ENCODE measurements at regions of chr10 and their contacts with region 1.

Region 1: GRCh38 chr10:128035557-128035973 is 90.7 kb downstream of the MKI67 start:
- DNase-seq: peak; percentile 80
- ATAC-seq: peak; percentile 94
- H3K4me3 Mint-ChIP-seq: no peak overlapping the region
- H3K27ac Mint-ChIP-seq: no peak overlapping the region
- H3K4me1 Mint-ChIP-seq: peaks cover 10% of the 10 kb centered on the region
- H3K27me3 Mint-ChIP-seq: no peaks in the 10 kb centered on the region
- CTCF ChIP-seq: peak; percentile 89

Region 2: DNA sequence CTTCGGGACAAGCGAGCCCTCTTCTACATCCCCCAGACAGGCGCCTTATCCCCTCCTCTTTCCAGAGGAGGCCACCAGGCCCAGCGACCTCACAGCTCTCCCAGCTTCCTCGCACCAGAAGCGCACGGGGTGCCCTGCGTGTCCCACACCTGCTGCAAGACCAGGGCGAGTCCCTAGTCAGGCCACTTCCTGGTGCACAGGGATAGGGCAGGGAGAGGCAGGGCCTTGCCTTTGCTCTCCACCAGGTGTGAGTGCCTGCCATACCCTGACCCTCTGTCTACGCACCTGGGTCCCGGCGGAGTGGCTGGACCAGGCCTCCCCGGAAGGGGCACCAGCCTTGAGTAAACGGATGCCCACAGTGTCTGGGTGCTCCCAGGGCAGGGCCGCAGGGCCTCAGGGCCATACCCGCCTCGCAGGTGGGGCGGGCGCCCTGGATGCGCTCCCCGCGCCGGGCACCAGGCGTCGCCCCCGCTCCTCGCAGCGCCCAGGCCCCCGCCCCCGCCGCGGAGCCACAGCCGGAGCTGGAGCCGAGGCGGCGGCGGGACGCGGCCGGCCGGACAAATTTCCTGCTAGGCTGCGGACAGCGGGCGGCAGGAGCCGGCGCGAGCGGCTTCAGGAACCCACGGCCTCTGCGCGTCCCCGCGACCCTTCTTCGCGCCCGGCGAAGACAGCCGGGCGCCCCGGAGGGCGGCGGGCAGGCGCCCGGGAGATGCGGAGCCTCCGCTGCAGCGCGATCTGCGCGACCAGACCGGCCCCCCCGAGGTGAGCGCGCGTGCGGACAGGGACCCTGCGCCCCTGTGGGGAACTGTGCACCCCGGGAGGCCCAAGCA is 128.8 kb before region 1 on chr10 and contains the start of gene PTPRE:
- CTCF ChIA-PET with region 1: interaction called, 11 read pairs
- POLR2A ChIA-PET with region 1: no interaction called
- intact Hi-C with region 1: no loop called
- DNase-seq: peak; percentile 73
- ATAC-seq: peak; percentile 99
- H3K4me3 Mint-ChIP-seq: no peak within 1 kb of the TSS
- H3K27ac Mint-ChIP-seq: no peak within 1 kb of the TSS
- H3K4me1 Mint-ChIP-seq: no peaks in the 10 kb centered on the region
- H3K27me3 Mint-ChIP-seq: peaks cover 31% of the 10 kb centered on the region
- CTCF ChIP-seq: peak; percentile 86
- total RNA-seq, gene PTPRE: 19.9 to 22.3 TPM

Region 3: DNA sequence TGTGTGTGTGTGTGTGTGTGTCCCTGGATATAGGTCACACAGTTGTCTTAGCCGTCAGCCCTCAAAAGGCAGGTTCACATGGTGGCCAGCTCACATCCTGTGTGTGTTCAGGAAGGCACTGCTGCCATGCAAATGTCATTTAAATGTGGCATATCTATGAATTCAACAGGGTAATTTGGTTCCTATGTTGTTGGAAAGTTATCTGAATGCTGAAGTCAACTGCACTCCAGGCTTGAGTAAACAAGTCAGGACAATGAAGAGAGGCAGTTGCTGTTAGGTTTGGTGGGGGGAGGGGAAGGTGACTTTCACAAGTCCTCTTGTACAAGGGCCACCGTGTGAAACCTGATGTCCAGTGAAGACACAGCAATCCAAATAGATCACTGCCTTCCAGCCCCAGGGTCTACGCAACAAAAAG is 67.5 kb before region 1 on chr10:
- CTCF ChIA-PET with region 1: no interaction called
- POLR2A ChIA-PET with region 1: no interaction called
- intact Hi-C with region 1: no loop called
- DNase-seq: no peak
- ATAC-seq: peak; percentile 47
- H3K4me3 Mint-ChIP-seq: no peak overlapping the region
- H3K27ac Mint-ChIP-seq: no peak overlapping the region
- H3K4me1 Mint-ChIP-seq: no peaks in the 10 kb centered on the region
- H3K27me3 Mint-ChIP-seq: no peaks in the 10 kb centered on the region
- CTCF ChIP-seq: no peak

Region 4: DNA sequence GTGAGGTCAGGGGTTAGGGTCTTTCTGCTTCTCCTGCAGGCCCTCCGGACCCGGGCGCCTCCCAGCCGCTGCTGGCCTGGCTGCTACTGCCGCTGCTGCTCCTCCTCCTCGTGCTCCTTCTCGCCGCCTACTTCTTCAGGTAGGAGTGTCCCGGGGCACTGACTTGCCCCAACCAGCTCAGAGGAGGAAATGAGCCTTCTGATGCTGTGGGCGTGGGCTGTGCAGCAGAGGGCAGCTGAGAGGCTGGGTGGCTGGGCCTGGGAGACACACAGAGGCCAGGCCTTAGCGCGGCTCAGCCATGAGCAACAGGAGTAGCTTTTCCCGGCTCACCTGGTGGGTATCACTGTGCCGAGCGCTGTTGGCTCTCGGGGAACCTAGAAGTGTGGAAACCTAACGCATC is 11.8 kb after region 1 on chr10:
- CTCF ChIA-PET with region 1: interaction called, 101 read pairs
- POLR2A ChIA-PET with region 1: interaction called, 3 read pairs
- intact Hi-C with region 1: no loop called
- DNase-seq: peak; percentile 93
- ATAC-seq: peak; percentile 98
- H3K4me3 Mint-ChIP-seq: peak overlapping the region; percentile 90
- H3K27ac Mint-ChIP-seq: peak overlapping the region; percentile 95
- H3K4me1 Mint-ChIP-seq: peaks cover 41% of the 10 kb centered on the region
- H3K27me3 Mint-ChIP-seq: no peaks in the 10 kb centered on the region
- CTCF ChIP-seq: no peak

Region 5: GRCh38 chr10:128069351-128070051 is 33.9 kb after region 1 on chr10:
- CTCF ChIA-PET with region 1: interaction called, 179 read pairs
- POLR2A ChIA-PET with region 1: interaction called, 4 read pairs
- intact Hi-C with region 1: loop called (anchors 1 kb)
- DNase-seq: peak; percentile 81
- ATAC-seq: peak; percentile 27
- H3K4me3 Mint-ChIP-seq: no peak overlapping the region
- H3K27ac Mint-ChIP-seq: no peak overlapping the region
- H3K4me1 Mint-ChIP-seq: peaks cover 29% of the 10 kb centered on the region
- H3K27me3 Mint-ChIP-seq: no peaks in the 10 kb centered on the region
- CTCF ChIP-seq: peak; percentile 87

Region 6: GRCh38 chr10:128095027-128095752 is 59.6 kb after region 1 on chr10:
- CTCF ChIA-PET with region 1: interaction called, 10 read pairs
- POLR2A ChIA-PET with region 1: no interaction called
- intact Hi-C with region 1: no loop called
- DNase-seq: peak; percentile 65
- ATAC-seq: peak; percentile 76
- H3K4me3 Mint-ChIP-seq: no peak overlapping the region
- H3K27ac Mint-ChIP-seq: peak overlapping the region; percentile 9
- H3K4me1 Mint-ChIP-seq: peaks cover 24% of the 10 kb centered on the region
- H3K27me3 Mint-ChIP-seq: no peaks in the 10 kb centered on the region
- CTCF ChIP-seq: no peak